ENCODE measurements at regions of chr10 and their contacts with region 1.

Region 1: DNA sequence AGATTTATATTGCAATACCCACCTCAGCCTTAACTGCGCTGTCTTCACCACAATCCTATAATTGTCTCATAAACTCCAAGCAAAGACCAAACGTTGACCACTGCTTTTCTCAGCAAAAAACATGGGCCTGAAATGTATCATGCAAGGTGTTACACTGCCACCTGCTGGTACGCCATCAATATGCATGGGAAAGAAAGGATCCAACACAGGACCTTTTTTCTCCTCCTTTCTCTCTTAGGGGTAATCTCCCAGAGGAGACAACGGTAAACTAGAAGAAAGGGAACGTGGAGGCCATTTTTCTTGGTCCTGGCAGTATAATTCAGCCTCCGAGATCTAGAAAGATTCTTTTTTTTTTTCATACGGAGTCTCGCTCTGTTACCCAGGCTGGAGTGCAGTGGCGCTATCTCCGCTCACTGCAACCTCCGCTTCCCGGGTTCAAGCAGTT is 79.1 kb upstream of the MPP7 start:
- DNase-seq: peak; percentile 50
- H3K4me3 ChIP-seq: no peak overlapping the region
- H3K27me3 ChIP-seq: peaks cover 14% of the 10 kb centered on the region
- CTCF ChIP-seq: peak; percentile 89

Region 2: DNA sequence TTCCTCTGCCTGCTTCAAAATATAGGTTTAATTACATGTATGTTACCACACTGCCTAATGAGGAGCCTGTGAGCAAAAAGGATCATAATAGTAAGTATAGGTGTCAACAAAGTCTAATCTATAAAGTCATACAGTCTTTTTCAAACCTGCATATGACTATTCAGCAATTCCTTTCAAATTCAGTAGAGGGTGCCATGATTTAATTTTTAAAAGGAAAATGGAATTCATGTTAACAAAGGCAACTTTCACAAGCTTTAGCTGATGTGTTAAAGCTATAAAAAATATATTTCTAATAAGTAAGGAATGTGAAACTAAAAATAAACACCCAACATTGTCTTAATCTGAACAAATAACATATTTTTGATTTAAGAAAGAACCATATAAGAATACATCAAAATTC is 131.1 kb before region 1 on chr10:
- CTCF ChIA-PET with region 1: interaction called, 119 read pairs
- POLR2A ChIA-PET with region 1: no interaction called
- DNase-seq: no peak
- H3K4me3 ChIP-seq: no peak overlapping the region
- H3K27me3 ChIP-seq: no peaks in the 10 kb centered on the region
- CTCF ChIP-seq: peak; percentile 42; the same call in 1 of the 2 replicates

Region 3: DNA sequence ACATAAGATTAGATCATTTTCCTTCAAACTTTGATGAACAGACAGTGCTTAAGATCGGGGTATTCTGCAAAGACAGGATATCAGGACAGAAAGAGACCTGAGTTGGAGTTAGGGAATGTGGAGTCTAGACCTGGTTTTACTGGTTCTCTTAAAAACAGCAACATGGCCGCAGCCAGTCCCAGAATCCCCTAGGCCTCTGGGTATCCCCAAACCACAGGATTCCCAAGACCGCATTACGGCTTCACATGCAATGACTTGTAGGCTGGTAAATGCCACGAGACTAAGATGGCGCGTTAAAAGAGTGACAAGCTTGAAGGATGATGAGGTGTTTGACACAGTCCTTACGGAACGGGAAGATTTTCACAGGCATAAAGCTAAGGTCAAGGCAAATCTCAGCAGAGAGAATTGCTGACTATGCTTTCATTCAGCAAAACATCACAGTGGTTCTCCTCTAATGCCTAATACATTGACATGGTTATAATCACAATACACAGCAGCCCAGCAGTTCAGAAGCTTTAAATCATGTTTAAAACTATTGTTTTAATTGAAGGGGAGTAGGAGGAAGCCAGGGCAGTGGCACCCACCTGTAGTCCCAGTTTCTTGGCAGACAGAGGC is 112.0 kb before region 1 on chr10:
- CTCF ChIA-PET with region 1: interaction called, 12 read pairs
- POLR2A ChIA-PET with region 1: no interaction called
- DNase-seq: no peak
- H3K4me3 ChIP-seq: no peak overlapping the region
- H3K27me3 ChIP-seq: peaks cover 4% of the 10 kb centered on the region
- CTCF ChIP-seq: no peak

Region 4: DNA sequence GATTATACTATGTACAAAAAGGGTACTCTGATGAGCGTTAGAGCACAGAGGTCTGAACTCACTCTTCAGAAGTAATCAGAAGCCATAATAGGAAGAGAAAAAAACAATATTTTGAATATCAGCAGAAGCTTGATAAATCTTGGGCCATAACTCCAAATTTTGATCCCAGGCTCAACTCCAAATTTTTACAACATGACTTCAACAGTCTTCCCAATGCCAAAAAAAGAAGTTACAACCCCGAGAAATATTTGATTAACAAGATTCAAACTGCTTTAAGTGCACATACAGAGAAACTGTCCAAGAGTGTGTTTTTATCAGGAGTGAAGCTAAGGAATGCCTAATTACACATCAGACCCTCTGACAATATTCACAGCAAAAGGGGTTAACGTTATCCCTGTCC is 86.6 kb before region 1 on chr10:
- CTCF ChIA-PET with region 1: interaction called, 10 read pairs
- POLR2A ChIA-PET with region 1: no interaction called
- DNase-seq: no peak
- H3K4me3 ChIP-seq: no peak overlapping the region
- H3K27me3 ChIP-seq: 0 out of 2 replicates have a peak, but pooled peaks cover 4% of the 10 kb centered on the region
- CTCF ChIP-seq: no peak

Region 5: GRCh38 chr10:28370107-28370835 is 11.7 kb before region 1 on chr10:
- CTCF ChIA-PET with region 1: interaction called, 19 read pairs
- POLR2A ChIA-PET with region 1: no interaction called
- DNase-seq: no peak
- H3K4me3 ChIP-seq: no peak overlapping the region
- H3K27me3 ChIP-seq: peaks cover 1% of the 10 kb centered on the region; the same call in 1 of the 2 replicates
- CTCF ChIP-seq: no peak

Region 6: DNA sequence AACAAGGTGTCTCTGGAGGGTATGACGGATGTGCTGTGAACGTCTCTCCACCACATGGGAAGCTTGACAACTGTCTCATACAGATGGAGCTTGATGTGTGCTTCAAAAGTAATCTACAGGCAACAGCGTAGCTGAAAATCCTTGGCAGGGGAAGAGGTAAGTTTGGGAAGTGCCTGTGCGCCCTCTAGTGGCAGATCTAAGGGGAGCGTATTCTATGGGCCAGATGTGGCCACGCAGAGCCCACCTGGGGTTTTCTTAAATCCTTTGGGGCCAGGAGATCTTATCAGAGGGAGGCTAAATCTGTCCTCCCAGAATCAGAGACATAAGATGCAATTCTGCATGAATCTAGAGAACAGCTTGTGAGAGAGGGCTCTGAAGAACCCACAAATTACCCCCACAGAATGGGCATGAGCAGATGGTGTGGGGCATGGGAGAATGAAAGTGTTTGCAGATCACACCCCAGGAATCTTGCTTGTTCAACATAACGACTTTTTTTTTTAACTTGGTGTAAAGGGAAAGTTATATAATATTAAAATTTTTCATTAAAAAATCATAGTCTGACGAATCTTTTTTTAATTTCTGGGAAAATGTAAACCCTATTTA is 12.1 kb after region 1 on chr10:
- CTCF ChIA-PET with region 1: interaction called, 73 read pairs
- POLR2A ChIA-PET with region 1: no interaction called
- DNase-seq: no peak
- H3K4me3 ChIP-seq: no peak overlapping the region
- H3K27me3 ChIP-seq: peaks cover under 1% of the 10 kb centered on the region; the same call in 1 of the 2 replicates
- CTCF ChIP-seq: peak; percentile 95

Region 7: GRCh38 chr10:28479425-28479865 is 97.5 kb after region 1 on chr10:
- CTCF ChIA-PET with region 1: no interaction called
- POLR2A ChIA-PET with region 1: no interaction called
- DNase-seq: no peak
- H3K4me3 ChIP-seq: no peak overlapping the region
- H3K27me3 ChIP-seq: peaks cover 2% of the 10 kb centered on the region; the same call in 1 of the 2 replicates
- CTCF ChIP-seq: no peak

Region 8: GRCh38 chr10:28839600-28840007 is 457.7 kb after region 1 on chr10:
- CTCF ChIA-PET with region 1: no interaction called
- POLR2A ChIA-PET with region 1: no interaction called
- DNase-seq: no peak
- H3K4me3 ChIP-seq: no peak overlapping the region
- H3K27me3 ChIP-seq: peaks cover 2% of the 10 kb centered on the region; the same call in 1 of the 2 replicates
- CTCF ChIP-seq: no peak